IMR-90 (cell line): ENCODE measurements at regions of chr1 and their contacts with region 1.

Region 1: GRCh38 chr1:226804907-226805759 is 65.3 kb upstream of the PSEN2 start:
- DNase-seq: no peak
- ATAC-seq: no peak
- H3K4me3 ChIP-seq: no peak overlapping the region
- H3K27ac ChIP-seq: no peak overlapping the region
- H3K4me1 ChIP-seq: no peaks in the 10 kb centered on the region
- H3K27me3 ChIP-seq: peaks cover 36% of the 10 kb centered on the region
- CTCF ChIP-seq: no peak
- POLR2A ChIP-seq: no peak
- RAD21 ChIP-seq: no peak

Region 2: GRCh38 chr1:226763905-226764264 is 41.2 kb before region 1 on chr1:
- CTCF ChIA-PET with region 1: no interaction called
- POLR2A ChIA-PET with region 1: interaction called, 10 read pairs
- dilution Hi-C with region 1: no loop called
- in situ Hi-C with region 1: no loop called
- intact Hi-C with region 1: no loop called
- DNase-seq: peak; percentile 96
- ATAC-seq: peak; percentile 95
- H3K4me3 ChIP-seq: no peak overlapping the region
- H3K27ac ChIP-seq: no peak overlapping the region
- H3K4me1 ChIP-seq: peaks cover 6% of the 10 kb centered on the region
- H3K27me3 ChIP-seq: peaks cover 3% of the 10 kb centered on the region; the same call in 1 of the 2 replicates
- CTCF ChIP-seq: no peak
- POLR2A ChIP-seq: no peak
- RAD21 ChIP-seq: no peak; the same call in 1 of the 2 replicates

Region 3: GRCh38 chr1:226831953-226832352 is 26.8 kb after region 1 on chr1:
- CTCF ChIA-PET with region 1: no interaction called
- POLR2A ChIA-PET with region 1: no interaction called
- dilution Hi-C with region 1: no loop called
- in situ Hi-C with region 1: no loop called
- intact Hi-C with region 1: no loop called
- DNase-seq: no peak
- ATAC-seq: no peak
- H3K4me3 ChIP-seq: no peak overlapping the region
- H3K27ac ChIP-seq: no peak overlapping the region
- H3K4me1 ChIP-seq: peaks cover 2% of the 10 kb centered on the region
- H3K27me3 ChIP-seq: peaks cover 4% of the 10 kb centered on the region
- CTCF ChIP-seq: no peak
- POLR2A ChIP-seq: no peak
- RAD21 ChIP-seq: no peak